ENCODE measurements at regions of chr9 and their contacts with region 1.

Region 1: DNA sequence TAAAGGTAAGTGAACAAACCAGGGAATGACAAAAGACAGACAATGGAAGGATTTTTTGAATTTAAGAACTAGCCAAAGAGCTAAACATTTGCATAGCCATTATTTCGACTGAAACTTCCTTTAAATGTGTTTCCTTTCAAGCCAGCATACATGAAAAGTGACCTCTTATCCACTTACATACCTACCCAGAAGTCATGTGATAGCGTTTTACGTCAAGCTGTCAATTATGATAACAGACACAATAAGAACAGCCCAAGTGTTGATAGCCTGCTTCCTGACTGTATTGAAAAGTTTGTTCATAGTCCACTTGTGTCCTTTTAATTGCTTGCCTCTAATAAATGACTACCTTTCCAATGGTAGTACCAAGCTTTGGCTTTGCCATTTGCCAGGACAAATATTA is 206.0 kb downstream of the NFIB start:
- DNase-seq: no peak

Region 2: GRCh38 chr9:13688994-13689600 is 418.9 kb before region 1 on chr9:
- intact Hi-C with region 1: loop called (anchors 10 kb)
- DNase-seq: no peak

Region 3: GRCh38 chr9:14140096-14140697 is 32.2 kb after region 1 on chr9:
- intact Hi-C with region 1: loop called (anchors 5 kb)
- DNase-seq: no peak

Region 4: GRCh38 chr9:14180093-14180959 is 72.3 kb after region 1 on chr9:
- intact Hi-C with region 1: loop called (anchors 10 kb)
- DNase-seq: no peak

Region 5: GRCh38 chr9:14245901-14246525 is 138.0 kb after region 1 on chr9:
- intact Hi-C with region 1: loop called (anchors 10 kb)
- DNase-seq: no peak

Region 6: DNA sequence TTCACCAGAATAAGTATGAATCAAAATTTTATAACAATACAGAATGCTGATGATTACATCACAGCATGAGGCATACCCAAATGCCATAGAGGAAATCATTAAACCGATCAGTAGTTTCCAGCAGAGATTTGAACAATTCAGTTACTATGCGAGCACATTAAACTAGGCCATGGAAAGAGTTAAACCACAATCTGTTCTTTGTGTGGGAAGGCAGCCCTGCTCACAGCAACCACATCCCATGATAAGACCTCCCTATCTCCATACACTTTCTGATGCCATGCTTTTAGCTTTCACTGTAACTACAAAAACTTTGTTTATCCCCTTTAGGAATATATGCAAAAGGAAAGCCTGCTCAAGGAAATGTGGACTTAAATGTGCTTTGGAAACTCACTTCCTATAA is 201.4 kb after region 1 on chr9:
- intact Hi-C with region 1: loop called (anchors 5 kb)
- DNase-seq: no peak

Region 7: DNA sequence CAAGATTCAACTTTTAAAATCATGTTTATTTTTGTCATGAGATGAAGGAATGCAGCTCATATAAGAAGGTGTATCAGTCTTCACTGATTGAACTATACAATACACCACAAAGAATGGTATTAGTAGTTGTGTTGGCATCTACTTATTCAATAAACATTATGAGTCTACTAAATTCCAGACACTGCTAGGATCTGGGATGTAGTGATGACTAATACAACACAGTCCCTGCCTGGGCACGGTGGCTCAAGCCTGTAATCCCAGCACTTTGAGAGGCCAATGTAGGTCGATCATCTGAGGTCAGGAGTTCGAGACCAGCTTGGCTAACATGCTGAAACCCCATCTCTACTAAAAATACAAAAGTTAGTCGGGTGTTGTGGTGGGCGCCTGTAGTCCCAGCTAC is 377.4 kb after region 1 on chr9:
- intact Hi-C with region 1: no loop called
- DNase-seq: no peak